GM12878 (cell line): ENCODE measurements at regions of chr1 and their contacts with region 1.

Region 1: GRCh38 chr1:154878371-154879022 is 8.4 kb upstream of the KCNN3 start:
- DNase-seq: no peak
- ATAC-seq: peak; percentile 94
- H3K4me3 ChIP-seq: no peak overlapping the region
- H3K27ac ChIP-seq: no peak overlapping the region
- H3K4me1 ChIP-seq: peaks cover 10% of the 10 kb centered on the region
- H3K27me3 ChIP-seq: no peaks in the 10 kb centered on the region
- CTCF ChIP-seq: peak; percentile 92 to 97 (median 94)
- EP300 ChIP-seq: no peak
- POLR2A ChIP-seq: no peak
- RAD21 ChIP-seq: peak; percentile 96

Region 2: DNA sequence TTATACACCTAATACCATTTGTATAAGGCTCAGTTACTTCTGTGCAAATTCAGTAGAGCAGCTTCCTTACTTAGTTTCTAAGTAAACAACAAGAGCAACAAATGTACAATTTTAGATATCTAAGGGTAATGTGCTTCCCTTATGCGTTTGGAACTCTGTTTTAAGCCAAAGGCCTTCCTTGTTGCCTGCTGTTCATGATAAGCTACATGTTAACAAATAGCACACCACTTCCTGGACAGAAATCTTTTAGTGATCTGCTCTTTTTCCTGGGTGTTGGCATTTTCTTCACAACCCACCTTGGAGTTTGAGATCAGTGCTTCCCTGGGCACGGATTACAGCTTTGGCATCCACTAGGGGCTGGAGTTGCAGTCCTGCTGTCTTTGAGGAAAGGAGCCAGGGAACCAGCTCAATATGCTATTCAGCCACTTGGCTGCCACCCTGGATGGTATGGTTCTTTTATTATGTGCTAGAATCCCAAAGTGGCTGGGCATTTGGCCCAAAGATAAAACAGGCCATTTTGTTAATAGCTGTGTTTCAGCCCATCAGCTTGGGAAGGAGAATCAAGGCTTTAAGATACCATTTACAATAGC is 214.9 kb before region 1 on chr1:
- CTCF ChIA-PET with region 1: interaction called, 137 read pairs
- POLR2A ChIA-PET with region 1: no interaction called
- RAD21 ChIA-PET with region 1: interaction called, 51 read pairs
- SMC1A ChIA-PET with region 1: interaction called, 113 read pairs
- in situ Hi-C with region 1: loop called (anchors 5 kb)
- intact Hi-C with region 1: no loop called
- DNase-seq: no peak
- ATAC-seq: no peak
- H3K4me3 ChIP-seq: no peak overlapping the region
- H3K27ac ChIP-seq: no peak overlapping the region
- H3K4me1 ChIP-seq: no peaks in the 10 kb centered on the region
- H3K27me3 ChIP-seq: no peaks in the 10 kb centered on the region; a peak in 1 of 4 replicates
- CTCF ChIP-seq: no peak
- EP300 ChIP-seq: no peak
- POLR2A ChIP-seq: no peak
- RAD21 ChIP-seq: no peak

Region 3: GRCh38 chr1:154707901-154708463 is 170.5 kb before region 1 on chr1:
- CTCF ChIA-PET with region 1: no interaction called
- POLR2A ChIA-PET with region 1: no interaction called
- RAD21 ChIA-PET with region 1: no interaction called
- SMC1A ChIA-PET with region 1: no interaction called
- in situ Hi-C with region 1: no loop called
- intact Hi-C with region 1: no loop called
- DNase-seq: no peak
- ATAC-seq: no peak
- H3K4me3 ChIP-seq: no peak overlapping the region
- H3K27ac ChIP-seq: no peak overlapping the region
- H3K4me1 ChIP-seq: no peaks in the 10 kb centered on the region
- H3K27me3 ChIP-seq: no peaks in the 10 kb centered on the region
- CTCF ChIP-seq: no peak
- EP300 ChIP-seq: no peak
- POLR2A ChIP-seq: no peak
- RAD21 ChIP-seq: no peak

Region 4: GRCh38 chr1:154747740-154748404 is 130.6 kb before region 1 on chr1:
- CTCF ChIA-PET with region 1: interaction called, 8 read pairs
- POLR2A ChIA-PET with region 1: no interaction called
- RAD21 ChIA-PET with region 1: interaction called, 5 read pairs
- SMC1A ChIA-PET with region 1: interaction called, 5 read pairs
- in situ Hi-C with region 1: no loop called
- intact Hi-C with region 1: loop called (anchors 5 kb)
- DNase-seq: peak; percentile 66
- ATAC-seq: peak; percentile 89
- H3K4me3 ChIP-seq: peak overlapping the region; percentile 34; the same call in 1 of the 2 replicates
- H3K27ac ChIP-seq: peak overlapping the region; percentile 67
- H3K4me1 ChIP-seq: peaks cover 48% of the 10 kb centered on the region
- H3K27me3 ChIP-seq: no peaks in the 10 kb centered on the region
- CTCF ChIP-seq: no peak
- EP300 ChIP-seq: no peak
- POLR2A ChIP-seq: no peak
- RAD21 ChIP-seq: no peak

Region 5: GRCh38 chr1:154772606-154773506 is 105.6 kb before region 1 on chr1:
- CTCF ChIA-PET with region 1: interaction called, 5 read pairs
- POLR2A ChIA-PET with region 1: interaction called, 3 read pairs
- RAD21 ChIA-PET with region 1: interaction called, 8 read pairs
- SMC1A ChIA-PET with region 1: interaction called, 7 read pairs
- in situ Hi-C with region 1: no loop called
- intact Hi-C with region 1: loop called (anchors 5 kb)
- DNase-seq: no peak
- ATAC-seq: peak; percentile 34; the same call in 1 of the 3 replicates
- H3K4me3 ChIP-seq: no peak overlapping the region
- H3K27ac ChIP-seq: peak overlapping the region; percentile 15; the same call in 1 of the 2 replicates
- H3K4me1 ChIP-seq: peaks cover 24% of the 10 kb centered on the region
- H3K27me3 ChIP-seq: no peaks in the 10 kb centered on the region
- CTCF ChIP-seq: peak in 2 of 3 experiments; percentile 10 to 24; a peak in 2 of 6 replicates
- EP300 ChIP-seq: no peak
- POLR2A ChIP-seq: no peak
- RAD21 ChIP-seq: no peak

Region 6: DNA sequence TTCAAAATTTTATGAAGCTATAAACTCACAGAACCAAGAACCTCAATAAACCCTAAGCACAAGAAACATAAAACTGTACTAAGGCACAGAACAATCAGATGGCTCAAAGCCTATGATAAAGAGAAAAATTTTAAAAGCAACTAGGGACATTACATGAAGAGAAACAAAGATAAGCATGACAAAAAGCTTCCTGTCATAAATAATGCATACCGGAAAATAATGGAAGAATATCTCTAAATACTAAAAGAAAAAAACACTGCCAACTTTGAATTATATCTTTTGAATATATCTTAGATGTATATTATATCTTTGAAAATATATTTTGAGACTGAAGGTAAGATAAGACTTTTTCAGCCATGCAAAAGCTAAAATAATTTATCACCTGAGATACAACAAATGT is 13.0 kb after region 1 on chr1:
- CTCF ChIA-PET with region 1: interaction called, 10 read pairs
- POLR2A ChIA-PET with region 1: interaction called, 3 read pairs
- RAD21 ChIA-PET with region 1: interaction called, 5 read pairs
- SMC1A ChIA-PET with region 1: interaction called, 9 read pairs
- in situ Hi-C with region 1: no loop called
- intact Hi-C with region 1: no loop called
- DNase-seq: no peak
- ATAC-seq: no peak
- H3K4me3 ChIP-seq: no peak overlapping the region
- H3K27ac ChIP-seq: no peak overlapping the region
- H3K4me1 ChIP-seq: peaks cover 4% of the 10 kb centered on the region
- H3K27me3 ChIP-seq: no peaks in the 10 kb centered on the region
- CTCF ChIP-seq: no peak
- EP300 ChIP-seq: no peak
- POLR2A ChIP-seq: no peak
- RAD21 ChIP-seq: no peak